ENCODE measurements at regions of chr3 and their contacts with region 1.

Region 1: GRCh38 chr3:12810013-12810780 is 13.7 kb downstream of the CAND2 start:
- DNase-seq: peak; percentile 90 to 99
- H3K4me3 ChIP-seq: peak overlapping the region; percentile 38 to 64 (median 60)
- H3K27ac ChIP-seq: no peak overlapping the region
- H3K4me1 ChIP-seq: peaks cover 0 to 8% (median 4%) of the 10 kb centered on the region in 4 experiments; a peak in 4 of 7 replicates
- H3K27me3 ChIP-seq: no peaks in the 10 kb centered on the region
- CTCF ChIP-seq: peak in 2 of 3 experiments; percentile 60 to 70; a peak in 3 of 4 replicates
- EP300 ChIP-seq: no peak
- POLR2A ChIP-seq: peak in 1 of 2 experiments; percentile 55; a peak in 1 of 3 replicates
- RAD21 ChIP-seq: peak; percentile 38 to 47; a peak in 3 of 4 replicates

Region 2: GRCh38 chr3:12689993-12690617 is 120.1 kb before region 1 on chr3:
- CTCF ChIA-PET with region 1: no interaction called
- POLR2A ChIA-PET with region 1: no interaction called
- DNase-seq: no peak
- H3K4me3 ChIP-seq: no peak overlapping the region
- H3K27ac ChIP-seq: no peak overlapping the region
- H3K4me1 ChIP-seq: peaks cover 0 to 6% (median 3%) of the 10 kb centered on the region in 4 experiments; a peak in 4 of 7 replicates
- H3K27me3 ChIP-seq: no peaks in the 10 kb centered on the region
- CTCF ChIP-seq: no peak
- EP300 ChIP-seq: no peak
- POLR2A ChIP-seq: no peak
- RAD21 ChIP-seq: no peak

Region 3: GRCh38 chr3:12796171-12797123 is 13.8 kb before region 1 on chr3 and contains the start of gene CAND2:
- CTCF ChIA-PET with region 1: interaction called, 34 read pairs
- POLR2A ChIA-PET with region 1: interaction called, 8 read pairs
- DNase-seq: peak in 1 of 2 experiments; percentile 71
- H3K4me3 ChIP-seq: peak within 1 kb of the TSS; percentile 69 to 88 (median 85)
- H3K27ac ChIP-seq: no peak within 1 kb of the TSS
- H3K4me1 ChIP-seq: peaks cover 0 to 10% (median 2%) of the 10 kb centered on the region in 4 experiments; a peak in 4 of 7 replicates
- H3K27me3 ChIP-seq: no peaks in the 10 kb centered on the region
- CTCF ChIP-seq: no peak
- EP300 ChIP-seq: no peak
- POLR2A ChIP-seq: peak in 1 of 2 experiments; percentile 38; a peak in 1 of 3 replicates
- RAD21 ChIP-seq: no peak; a peak in 1 of 4 replicates
- total RNA-seq, gene CAND2: 8.7 and 11.2 TPM in 2 replicates

Region 4: GRCh38 chr3:12822725-12823373 is 12.7 kb after region 1 on chr3:
- CTCF ChIA-PET with region 1: interaction called, 11 read pairs
- POLR2A ChIA-PET with region 1: interaction called, 661 read pairs
- DNase-seq: no peak
- H3K4me3 ChIP-seq: no peak overlapping the region
- H3K27ac ChIP-seq: no peak overlapping the region
- H3K4me1 ChIP-seq: no peaks in the 10 kb centered on the region; a peak in 1 of 7 replicates
- H3K27me3 ChIP-seq: no peaks in the 10 kb centered on the region
- CTCF ChIP-seq: peak in 2 of 3 experiments; percentile 23 to 26; a peak in 2 of 4 replicates
- EP300 ChIP-seq: no peak
- POLR2A ChIP-seq: no peak
- RAD21 ChIP-seq: no peak; a peak in 1 of 4 replicates

Region 5: DNA sequence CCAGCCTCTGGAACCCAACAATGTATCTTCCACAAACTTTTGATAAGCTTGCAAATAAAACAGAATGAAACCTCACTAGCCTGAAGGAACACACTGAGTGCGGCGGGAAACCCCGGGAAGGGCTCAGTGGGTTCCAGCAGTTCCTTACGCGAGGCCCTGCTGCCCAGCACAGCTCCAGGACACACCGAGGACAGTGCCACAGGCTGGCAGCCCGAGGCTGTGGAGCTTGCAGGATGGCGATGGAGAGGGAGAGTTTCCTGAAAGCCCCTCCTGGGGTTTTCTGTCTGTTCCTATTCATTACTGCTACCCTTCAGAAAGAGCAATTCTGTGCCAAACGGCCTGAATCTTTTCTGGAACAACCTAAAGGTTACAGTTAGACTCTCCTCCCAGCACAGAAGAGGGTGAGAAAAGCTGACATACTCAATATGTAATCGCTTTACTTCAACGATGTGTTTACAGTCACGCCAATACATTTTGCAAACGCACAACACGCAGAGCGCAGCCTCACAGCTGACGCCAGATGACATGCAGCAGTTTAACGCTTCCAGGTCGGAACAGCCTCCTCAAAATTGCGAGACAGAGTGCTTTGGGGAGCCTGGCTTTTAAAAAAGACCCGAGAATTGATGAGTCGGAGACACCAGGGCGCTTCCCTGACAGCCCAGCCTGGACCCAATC is 88.2 kb after region 1 on chr3:
- CTCF ChIA-PET with region 1: no interaction called
- POLR2A ChIA-PET with region 1: no interaction called
- DNase-seq: no peak
- H3K4me3 ChIP-seq: no peak overlapping the region
- H3K27ac ChIP-seq: no peak overlapping the region
- H3K4me1 ChIP-seq: no peaks in the 10 kb centered on the region; a peak in 1 of 7 replicates
- H3K27me3 ChIP-seq: no peaks in the 10 kb centered on the region; a peak in 2 of 7 replicates
- CTCF ChIP-seq: no peak
- EP300 ChIP-seq: no peak
- POLR2A ChIP-seq: no peak
- RAD21 ChIP-seq: no peak